Sigmoid colon (tissue), 7 donors: ENCODE measurements at regions of chr17 and their contacts with region 1.

Region 1: DNA sequence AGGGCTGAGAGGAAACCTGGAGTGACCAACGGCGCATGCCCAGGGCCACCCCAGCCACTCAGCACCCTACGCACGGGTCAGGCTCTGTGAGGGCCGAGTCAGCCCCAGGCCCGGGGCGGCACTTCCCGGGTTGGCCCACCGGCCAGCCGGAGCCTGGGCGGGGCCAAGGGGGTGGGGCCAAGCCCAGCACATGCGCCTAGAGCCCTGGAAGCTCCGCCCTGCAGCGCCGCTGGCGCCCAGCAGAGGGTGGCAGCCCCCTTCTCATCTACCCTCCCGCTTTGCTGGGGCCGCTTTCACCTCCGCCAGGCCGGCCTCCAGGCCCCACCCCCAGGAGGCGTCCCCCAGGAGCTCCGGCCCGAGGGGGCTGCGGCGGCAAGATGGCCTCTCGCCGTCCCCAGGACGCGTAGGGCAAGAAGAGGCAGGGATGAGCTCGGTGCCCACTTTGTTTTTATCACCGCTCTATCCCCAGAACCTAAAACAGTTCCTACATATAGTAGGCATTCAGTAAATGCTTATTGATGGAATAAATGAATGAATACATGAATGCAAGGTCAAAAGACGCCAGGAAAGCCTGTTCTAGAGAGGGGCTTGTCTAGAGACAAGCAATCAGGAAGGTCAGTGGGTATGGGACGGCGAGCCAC is 31.3 kb downstream of the MYO18A start:
- DNase-seq: peak; percentile 97
- H3K4me3 ChIP-seq: peak overlapping the region; percentile 39 to 55 (median 49)
- H3K27ac ChIP-seq: peak overlapping the region; percentile 79 to 83 (median 80)
- H3K4me1 ChIP-seq: peaks cover 0 to 31% (median 17%) of the 10 kb centered on the region in 4 donors
- H3K27me3 ChIP-seq: no peaks in the 10 kb centered on the region
- CTCF ChIP-seq: peak; percentile 86 to 97 (median 96)
- EP300 ChIP-seq: no peak
- POLR2A ChIP-seq: no peak

Region 2: DNA sequence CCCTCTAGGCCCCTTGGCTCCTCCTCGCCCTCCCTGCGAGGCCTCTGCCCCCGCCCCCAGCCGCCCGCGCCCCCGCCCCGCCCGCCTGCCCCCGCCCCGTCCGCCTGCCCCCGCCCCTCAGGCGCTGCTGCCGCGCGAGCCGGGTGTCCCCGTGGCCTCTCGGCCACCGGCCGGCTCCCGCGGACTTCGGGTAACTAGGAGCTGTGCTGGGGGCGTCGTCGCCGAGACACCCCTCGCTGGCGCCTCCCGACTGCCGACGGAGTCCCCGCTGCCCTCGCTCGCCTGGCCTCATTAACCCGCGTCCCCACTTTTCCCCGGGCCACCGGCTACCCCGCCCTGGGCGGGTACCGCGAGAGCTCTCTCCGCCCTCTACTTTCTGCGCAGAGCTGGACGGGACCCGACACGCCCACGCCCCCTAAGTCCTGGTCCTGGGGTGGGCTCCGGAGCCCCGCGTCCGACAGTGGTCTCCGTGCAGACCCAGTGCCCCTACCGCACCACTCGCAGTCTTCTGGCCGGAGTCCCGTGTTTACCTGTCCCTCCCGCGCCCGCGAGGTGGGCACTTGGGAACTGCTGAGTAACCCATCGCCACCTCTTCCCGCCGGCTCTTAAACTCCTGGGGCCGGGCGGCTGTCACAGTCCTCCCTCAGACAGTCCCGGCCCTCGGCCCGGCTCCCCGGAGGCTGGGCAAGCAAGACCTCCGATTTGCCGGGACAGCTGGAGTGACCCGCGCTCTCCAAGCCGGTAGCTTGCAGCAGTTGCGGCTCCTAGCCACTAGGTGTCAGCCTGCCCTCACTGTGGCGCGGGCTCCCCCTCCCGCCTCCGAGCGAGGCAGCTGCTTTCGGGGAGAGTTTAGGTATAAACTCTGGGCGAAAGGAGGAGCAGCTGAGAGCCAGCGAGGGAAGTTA is 422.4 kb before region 1 on chr17 and contains the start of gene TLCD1:
- intact Hi-C with region 1: no loop called
- DNase-seq: peak; percentile 96
- H3K4me3 ChIP-seq: peak within 1 kb of the TSS; percentile 51 to 83 (median 68)
- H3K27ac ChIP-seq: peak within 1 kb of the TSS; percentile 88 to 97 (median 96)
- H3K4me1 ChIP-seq: peaks cover 0 to 47% (median 41%) of the 10 kb centered on the region in 4 donors
- H3K27me3 ChIP-seq: peaks cover 0 to 8% (median 0%) of the 10 kb centered on the region in 3 donors
- CTCF ChIP-seq: peak; percentile 99 to 100 (median 100)
- EP300 ChIP-seq: no peak
- POLR2A ChIP-seq: no peak
- total RNA-seq, gene TLCD1: 0.66 to 0.71 TPM in 2 of 4 donors, not detected in the others

Region 3: GRCh38 chr17:28951991-28952975 is 196.6 kb before region 1 on chr17:
- intact Hi-C with region 1: no loop called
- DNase-seq: peak; percentile 99
- H3K4me3 ChIP-seq: peak overlapping the region; percentile 40 to 96 (median 74)
- H3K27ac ChIP-seq: peak overlapping the region; percentile 90 to 97 (median 94)
- H3K4me1 ChIP-seq: peaks cover 0 to 27% (median 14%) of the 10 kb centered on the region in 4 donors
- H3K27me3 ChIP-seq: no peaks in the 10 kb centered on the region
- CTCF ChIP-seq: no peak
- EP300 ChIP-seq: peak in 1 of 4 donors; percentile 52
- POLR2A ChIP-seq: peak in 1 of 2 donors; percentile 4

Region 4: GRCh38 chr17:29180034-29180787 is 31.3 kb after region 1 on chr17 and contains the start of gene MYO18A:
- intact Hi-C with region 1: loop called (anchors 1 kb)
- DNase-seq: peak; percentile 87
- H3K4me3 ChIP-seq: peak within 1 kb of the TSS; percentile 43 to 73 (median 70)
- H3K27ac ChIP-seq: peak within 1 kb of the TSS; percentile 83 to 89 (median 86)
- H3K4me1 ChIP-seq: peaks cover 0 to 48% (median 41%) of the 10 kb centered on the region in 4 donors
- H3K27me3 ChIP-seq: no peaks in the 10 kb centered on the region
- CTCF ChIP-seq: peak; percentile 62 to 89 (median 78)
- EP300 ChIP-seq: no peak
- POLR2A ChIP-seq: no peak
- total RNA-seq, gene MYO18A: 28.2 to 90.3 (median 53.4) TPM

Region 5: DNA sequence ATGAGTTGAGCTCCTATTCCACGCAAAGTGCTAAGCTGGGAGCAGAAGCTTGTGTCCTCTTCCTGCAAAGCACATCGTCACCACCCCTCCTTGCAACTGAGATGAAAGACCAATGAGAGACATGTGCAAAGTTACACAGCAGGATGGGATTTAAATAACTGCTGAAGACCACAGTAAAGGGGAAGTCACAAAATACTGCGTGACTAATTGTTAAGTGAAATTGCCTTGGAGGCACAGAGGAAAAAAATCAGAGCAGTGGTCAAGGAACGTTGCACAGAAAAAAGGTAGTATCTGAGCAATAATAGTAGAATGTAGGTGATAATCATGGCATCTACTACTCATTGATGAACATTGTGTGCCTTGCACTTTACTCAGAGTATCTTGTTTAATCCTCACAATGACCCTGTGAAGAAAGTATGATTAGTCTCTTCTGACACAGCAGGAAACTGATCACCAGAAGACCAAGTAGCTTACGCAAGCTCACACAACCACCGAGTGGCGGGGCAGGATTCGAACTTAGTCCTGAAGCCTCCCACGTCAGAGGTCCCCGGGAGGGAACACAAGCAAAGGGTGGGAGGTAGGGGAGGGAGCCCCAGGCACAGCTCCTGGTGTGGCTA is 46.7 kb after region 1 on chr17:
- intact Hi-C with region 1: no loop called
- DNase-seq: no peak
- H3K4me3 ChIP-seq: no peak overlapping the region
- H3K27ac ChIP-seq: no peak overlapping the region
- H3K4me1 ChIP-seq: no peaks in the 10 kb centered on the region
- H3K27me3 ChIP-seq: peaks cover 0 to 4% (median 0%) of the 10 kb centered on the region in 3 donors
- CTCF ChIP-seq: no peak
- EP300 ChIP-seq: no peak
- POLR2A ChIP-seq: no peak

Region 6: GRCh38 chr17:29219378-29220047 is 70.6 kb after region 1 on chr17:
- intact Hi-C with region 1: loop called (anchors 1 kb)
- DNase-seq: peak; percentile 88
- H3K4me3 ChIP-seq: no peak overlapping the region
- H3K27ac ChIP-seq: no peak overlapping the region
- H3K4me1 ChIP-seq: peaks cover 0 to 9% (median 7%) of the 10 kb centered on the region in 4 donors
- H3K27me3 ChIP-seq: no peaks in the 10 kb centered on the region
- CTCF ChIP-seq: peak; percentile 73 to 95 (median 86)
- EP300 ChIP-seq: no peak
- POLR2A ChIP-seq: no peak